Left ventricle myocardium superior (tissue), 1 donor: ENCODE measurements at regions of chr6 and their contacts with region 1.

Region 1: GRCh38 chr6:165884813-165885765 is 222.0 kb upstream of the PDE10A start:
- DNase-seq: peak; percentile 89
- ATAC-seq: peak; percentile 94

Region 2: GRCh38 chr6:166097915-166098522 is 212.9 kb after region 1 on chr6:
- intact Hi-C with region 1: loop called (anchors 5 kb)
- DNase-seq: peak; percentile 86
- ATAC-seq: peak; percentile 98